ENCODE measurements at regions of chr12 and their contacts with region 1.

Region 1: DNA sequence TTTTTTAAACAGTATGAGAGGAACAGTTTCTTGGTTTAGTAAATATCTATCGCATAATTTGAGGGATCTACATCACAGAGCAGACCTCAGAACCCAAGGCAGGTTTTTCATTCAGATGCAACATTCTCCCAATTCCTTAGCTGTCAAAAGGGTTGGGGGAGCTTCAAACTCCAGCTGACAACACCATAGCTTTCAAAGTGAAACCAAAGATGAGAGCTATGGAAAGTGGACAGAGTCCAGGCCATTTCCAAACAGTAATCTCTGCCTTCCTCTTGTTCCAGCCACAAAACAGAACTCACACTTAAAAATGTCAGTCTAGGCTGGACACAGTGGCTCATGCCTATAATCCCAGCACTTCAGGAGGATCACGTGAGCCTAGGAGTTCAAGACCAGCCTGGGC is 87.8 kb downstream of the SPRING1 start:
- DNase-seq: no peak
- ATAC-seq: no peak
- H3K4me3 ChIP-seq: no peak overlapping the region
- H3K27ac ChIP-seq: peak overlapping the region in 1 of 10 donors; percentile 49
- H3K4me1 ChIP-seq: peaks cover 0 to 15% (median 0%) of the 10 kb centered on the region in 9 donors
- H3K27me3 ChIP-seq: no peaks in the 10 kb centered on the region
- CTCF ChIP-seq: no peak

Region 2: DNA sequence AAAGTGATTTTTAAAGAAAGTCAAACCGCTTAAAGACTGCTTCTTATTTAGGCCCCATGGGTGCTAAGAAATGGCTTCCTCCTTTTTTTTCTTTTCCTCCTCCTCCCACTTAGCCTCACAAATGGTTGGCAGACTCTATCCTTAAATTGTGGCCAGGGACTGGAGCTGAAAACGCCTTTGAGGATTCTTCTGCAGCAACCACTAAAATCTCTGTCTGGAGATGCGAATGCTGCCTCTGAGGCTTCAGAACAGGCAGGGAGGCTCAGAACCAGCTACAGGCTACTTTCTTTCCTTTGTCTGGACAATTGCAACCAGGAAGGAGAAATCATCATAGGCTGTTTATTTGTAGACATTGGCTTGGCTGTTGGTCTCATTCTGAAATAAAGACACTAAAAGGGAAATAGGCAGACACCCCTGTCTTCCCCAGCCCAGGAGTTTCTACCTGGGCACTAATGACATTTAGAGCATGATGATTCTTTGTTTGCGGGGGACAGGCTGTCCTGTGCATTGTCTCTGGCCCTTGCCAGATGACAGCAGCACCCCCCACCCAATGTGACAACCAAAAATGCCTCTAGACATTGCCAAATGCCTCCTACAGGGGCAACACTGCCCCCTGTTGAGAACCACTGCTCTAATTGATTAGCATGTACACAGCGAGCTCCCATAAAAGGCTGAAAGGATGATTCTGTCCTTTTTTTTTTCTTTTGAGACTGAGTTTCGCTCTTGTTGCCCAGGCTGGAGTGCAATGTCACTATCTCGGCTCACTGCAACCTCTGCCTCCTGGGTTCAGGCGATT is 40.5 kb before region 1 on chr12:
- intact Hi-C with region 1: loop called in 1 of 10 experiments (anchors 2 kb)
- DNase-seq: no peak
- ATAC-seq: peak in 3 of 8 donors; percentile 16 to 28 (median 20)
- H3K4me3 ChIP-seq: no peak overlapping the region
- H3K27ac ChIP-seq: peak overlapping the region in 5 of 10 donors; percentile 11 to 66 (median 19)
- H3K4me1 ChIP-seq: peaks cover 0 to 29% (median 16%) of the 10 kb centered on the region in 9 donors
- H3K27me3 ChIP-seq: peaks cover 0 to 10% (median 0%) of the 10 kb centered on the region in 7 donors
- CTCF ChIP-seq: peak in 7 of 9 donors; percentile 23 to 48 (median 38)

Region 3: DNA sequence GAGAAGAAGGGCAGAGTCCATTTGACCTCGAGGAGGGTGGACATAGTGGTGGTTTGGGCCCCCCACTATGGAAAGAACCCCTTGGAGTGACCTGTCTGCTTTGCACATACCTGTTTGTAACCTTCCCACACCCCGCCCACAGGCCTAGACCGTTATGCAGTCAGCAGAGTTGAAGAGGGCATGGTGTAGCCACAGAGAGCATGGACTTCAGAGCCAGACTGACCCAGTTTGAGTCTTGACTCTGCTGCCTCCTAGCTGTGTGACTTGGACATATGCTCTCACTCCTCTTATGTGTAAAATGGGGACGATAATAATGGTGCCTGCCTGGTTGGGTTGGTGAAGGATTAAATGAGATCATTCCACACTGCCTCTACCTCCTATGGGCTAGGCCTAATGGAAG is 752.3 kb after region 1 on chr12:
- intact Hi-C with region 1: no loop called
- DNase-seq: no peak
- ATAC-seq: no peak
- H3K4me3 ChIP-seq: no peak overlapping the region
- H3K27ac ChIP-seq: no peak overlapping the region
- H3K4me1 ChIP-seq: no peaks in the 10 kb centered on the region
- H3K27me3 ChIP-seq: peaks cover 0 to 12% (median 0%) of the 10 kb centered on the region in 7 donors
- CTCF ChIP-seq: no peak

Measured in heart right ventricle (tissue), 16 donors.